CD4-positive, alpha-beta memory T cell (primary cell): ENCODE measurements at regions of chr11 and their contacts with region 1.

Region 1: GRCh38 chr11:76207642-76208401 is 1.5 kb upstream of the WNT11 start:
- DNase-seq: peak; percentile 63 to 82 (median 76)
- H3K4me3 ChIP-seq: peak overlapping the region; percentile 63 to 72
- H3K4me3 Mint-ChIP-seq: peak overlapping the region; percentile 82 to 89 (median 86)
- H3K27ac ChIP-seq: no peak overlapping the region
- H3K27ac Mint-ChIP-seq: peak overlapping the region in 4 of 7 donors; percentile 22 to 60 (median 50)
- H3K4me1 ChIP-seq: peaks cover 35% of the 10 kb centered on the region
- H3K4me1 Mint-ChIP-seq: peaks cover 8 to 33% (median 17%) of the 10 kb centered on the region in 4 donors
- H3K27me3 ChIP-seq: peaks cover 22% of the 10 kb centered on the region
- H3K27me3 Mint-ChIP-seq: peaks cover 28 to 38% of the 10 kb centered on the region in 2 donors

Region 2: GRCh38 chr11:76102802-76103201 is 105.0 kb before region 1 on chr11:
- CTCF ChIA-PET with region 1: no interaction called
- POLR2A ChIA-PET with region 1: no interaction called
- intact Hi-C with region 1: no loop called
- DNase-seq: no peak
- H3K4me3 ChIP-seq: no peak overlapping the region
- H3K4me3 Mint-ChIP-seq: no peak overlapping the region
- H3K27ac ChIP-seq: no peak overlapping the region
- H3K27ac Mint-ChIP-seq: no peak overlapping the region
- H3K4me1 ChIP-seq: no peaks in the 10 kb centered on the region
- H3K4me1 Mint-ChIP-seq: no peaks in the 10 kb centered on the region
- H3K27me3 ChIP-seq: no peaks in the 10 kb centered on the region
- H3K27me3 Mint-ChIP-seq: no peaks in the 10 kb centered on the region

Region 3: GRCh38 chr11:76225122-76225611 is 17.3 kb after region 1 on chr11:
- CTCF ChIA-PET with region 1: interaction called, 32 read pairs
- POLR2A ChIA-PET with region 1: interaction called, 3 read pairs
- intact Hi-C with region 1: no loop called
- DNase-seq: no peak
- H3K4me3 ChIP-seq: no peak overlapping the region
- H3K4me3 Mint-ChIP-seq: no peak overlapping the region
- H3K27ac ChIP-seq: no peak overlapping the region
- H3K27ac Mint-ChIP-seq: peak overlapping the region in 1 of 7 donors; percentile 39
- H3K4me1 ChIP-seq: no peaks in the 10 kb centered on the region
- H3K4me1 Mint-ChIP-seq: no peaks in the 10 kb centered on the region
- H3K27me3 ChIP-seq: no peaks in the 10 kb centered on the region
- H3K27me3 Mint-ChIP-seq: peaks cover 0 to 2% of the 10 kb centered on the region in 2 donors

Region 4: GRCh38 chr11:76288166-76288980 is 80.6 kb after region 1 on chr11:
- CTCF ChIA-PET with region 1: interaction called, 26 read pairs
- POLR2A ChIA-PET with region 1: interaction called, 7 read pairs
- intact Hi-C with region 1: no loop called
- DNase-seq: peak in 4 of 5 donors; percentile 16 to 31 (median 25)
- H3K4me3 ChIP-seq: no peak overlapping the region
- H3K4me3 Mint-ChIP-seq: peak overlapping the region in 7 of 8 donors; percentile 58 to 80 (median 71)
- H3K27ac ChIP-seq: peak overlapping the region; percentile 27
- H3K27ac Mint-ChIP-seq: peak overlapping the region; percentile 81 to 96 (median 93)
- H3K4me1 ChIP-seq: peaks cover 34% of the 10 kb centered on the region
- H3K4me1 Mint-ChIP-seq: peaks cover 31 to 48% (median 36%) of the 10 kb centered on the region in 4 donors
- H3K27me3 ChIP-seq: no peaks in the 10 kb centered on the region
- H3K27me3 Mint-ChIP-seq: no peaks in the 10 kb centered on the region

Region 5: DNA sequence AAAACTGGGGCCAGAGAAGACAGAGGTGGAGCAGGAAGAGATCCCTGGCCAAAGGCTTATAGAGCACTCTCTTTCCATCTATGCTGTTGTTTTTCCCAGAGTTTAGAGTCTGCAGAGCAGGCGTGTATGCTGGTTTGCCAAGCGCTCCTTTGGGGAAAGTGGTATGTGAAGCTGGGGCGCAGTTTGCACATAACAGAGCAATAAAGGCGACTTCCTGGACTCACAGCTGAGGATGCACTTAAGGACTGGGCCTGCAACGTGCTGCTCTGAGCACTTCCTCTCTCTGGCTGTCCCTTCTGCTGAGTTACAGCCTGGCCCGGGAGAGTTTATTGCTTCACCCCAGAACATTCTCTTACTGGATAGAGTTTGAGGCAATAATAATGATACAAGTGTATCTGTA is 131.4 kb after region 1 on chr11:
- CTCF ChIA-PET with region 1: interaction called, 19 read pairs
- POLR2A ChIA-PET with region 1: no interaction called
- intact Hi-C with region 1: no loop called
- DNase-seq: peak in 1 of 5 donors; percentile 3
- H3K4me3 ChIP-seq: no peak overlapping the region
- H3K4me3 Mint-ChIP-seq: peak overlapping the region in 3 of 8 donors; percentile 15 to 73 (median 22)
- H3K27ac ChIP-seq: no peak overlapping the region
- H3K27ac Mint-ChIP-seq: peak overlapping the region; percentile 36 to 90 (median 81)
- H3K4me1 ChIP-seq: peaks cover 23% of the 10 kb centered on the region
- H3K4me1 Mint-ChIP-seq: peaks cover 18 to 45% (median 28%) of the 10 kb centered on the region in 4 donors
- H3K27me3 ChIP-seq: no peaks in the 10 kb centered on the region
- H3K27me3 Mint-ChIP-seq: no peaks in the 10 kb centered on the region

Region 6: DNA sequence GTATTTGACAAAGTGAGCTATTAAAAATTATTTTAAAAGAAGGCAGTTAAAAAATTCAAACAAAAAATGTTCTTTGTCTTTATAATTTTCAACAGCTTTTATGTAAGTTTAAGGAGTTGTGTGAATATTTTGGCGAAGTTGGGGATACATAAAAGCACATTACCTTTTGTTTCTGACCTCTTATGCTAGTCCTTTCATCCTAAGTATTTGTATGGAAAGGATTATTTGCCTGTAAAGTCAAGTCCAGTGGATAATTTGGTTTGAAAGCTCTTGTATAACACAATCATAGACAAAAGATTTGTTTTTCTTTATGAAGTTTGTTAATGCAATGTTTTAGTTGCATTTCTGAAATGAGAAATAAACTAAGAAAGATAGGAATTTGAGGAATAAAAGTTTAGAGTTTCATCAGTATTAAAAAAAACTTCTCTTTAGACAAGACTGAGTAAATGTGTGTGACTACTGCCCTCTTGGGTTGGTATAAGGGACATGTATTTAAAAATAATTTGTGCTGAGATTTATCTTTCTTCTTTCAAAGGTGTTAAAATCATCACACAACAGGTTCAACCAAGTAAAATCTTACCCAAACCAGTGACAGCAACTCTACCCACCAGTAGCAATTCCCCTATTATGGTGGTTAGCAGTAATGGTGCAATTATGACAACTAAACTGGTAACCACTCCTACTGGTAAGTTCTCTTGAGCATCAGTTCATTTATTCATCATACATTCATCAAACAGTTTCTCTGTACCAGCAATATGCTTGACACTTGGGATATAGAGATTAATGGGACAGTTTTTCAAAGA is 305.2 kb after region 1 on chr11:
- CTCF ChIA-PET with region 1: no interaction called
- POLR2A ChIA-PET with region 1: no interaction called
- intact Hi-C with region 1: loop called (anchors 2 kb)
- DNase-seq: no peak
- H3K4me3 ChIP-seq: no peak overlapping the region
- H3K4me3 Mint-ChIP-seq: no peak overlapping the region
- H3K27ac ChIP-seq: no peak overlapping the region
- H3K27ac Mint-ChIP-seq: no peak overlapping the region
- H3K4me1 ChIP-seq: no peaks in the 10 kb centered on the region
- H3K4me1 Mint-ChIP-seq: peaks cover 0 to 1% (median 0%) of the 10 kb centered on the region in 4 donors
- H3K27me3 ChIP-seq: no peaks in the 10 kb centered on the region
- H3K27me3 Mint-ChIP-seq: no peaks in the 10 kb centered on the region